Left ventricle myocardium inferior (tissue), 1 donor: ENCODE measurements at regions of chr22 and their contacts with region 1.

Region 1: GRCh38 chr22:22960307-22960706 is 72.7 kb downstream of the IGLL5 start:
- DNase-seq: no peak
- H3K4me3 ChIP-seq: no peak overlapping the region
- H3K27ac ChIP-seq: peak overlapping the region; percentile 80
- H3K4me1 ChIP-seq: peaks cover 13% of the 10 kb centered on the region
- H3K27me3 ChIP-seq: peaks cover 30% of the 10 kb centered on the region
- CTCF ChIP-seq: no peak

Region 2: GRCh38 chr22:23029521-23030228 is 69.4 kb after region 1 on chr22:
- intact Hi-C with region 1: no loop called
- DNase-seq: no peak
- H3K4me3 ChIP-seq: no peak overlapping the region
- H3K27ac ChIP-seq: no peak overlapping the region
- H3K4me1 ChIP-seq: no peaks in the 10 kb centered on the region
- H3K27me3 ChIP-seq: peaks cover 40% of the 10 kb centered on the region
- CTCF ChIP-seq: no peak

Region 3: DNA sequence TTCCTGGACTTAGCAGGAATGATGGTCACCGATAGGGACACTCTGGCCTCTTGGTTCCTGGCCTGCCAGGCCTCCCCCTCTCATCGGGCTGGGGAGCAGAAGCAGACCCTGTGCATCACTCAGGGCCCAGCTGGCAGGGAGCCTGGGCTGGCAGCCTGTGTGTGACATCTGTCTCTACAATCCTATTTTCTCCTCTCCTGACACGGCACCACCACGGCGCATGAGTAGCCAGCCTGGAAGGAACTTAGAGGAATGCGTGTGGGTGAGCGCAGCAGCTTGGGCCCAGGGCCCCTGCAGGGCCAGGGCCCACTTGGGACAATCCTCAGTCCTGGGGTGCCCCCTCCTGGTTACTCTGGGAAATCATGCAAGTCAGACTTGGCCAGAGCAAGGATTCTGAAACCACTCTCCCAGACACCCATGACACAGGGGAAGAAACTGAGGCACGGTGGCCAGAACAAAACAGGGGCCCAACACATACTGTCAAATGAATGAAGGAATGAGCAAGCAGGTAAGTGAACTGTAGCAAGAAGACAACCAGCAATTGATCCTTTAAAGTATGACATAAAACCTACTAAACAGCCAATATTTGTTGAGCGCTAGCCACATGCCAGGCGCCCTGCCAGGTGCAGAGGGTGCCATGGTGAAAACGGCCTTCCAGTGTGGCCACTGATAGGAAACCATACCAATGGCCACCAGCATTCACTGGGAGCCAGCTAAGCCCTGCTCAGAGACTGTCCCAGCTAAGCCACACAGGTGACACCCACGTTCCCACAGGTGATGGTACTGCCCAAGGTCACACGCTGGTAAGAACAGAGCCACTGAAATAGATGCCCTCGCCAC is 168.2 kb after region 1 on chr22:
- intact Hi-C with region 1: loop called (anchors 5 kb)
- DNase-seq: peak; percentile 59
- H3K4me3 ChIP-seq: no peak overlapping the region
- H3K27ac ChIP-seq: no peak overlapping the region
- H3K4me1 ChIP-seq: peaks cover 8% of the 10 kb centered on the region
- H3K27me3 ChIP-seq: no peaks in the 10 kb centered on the region
- CTCF ChIP-seq: peak; percentile 84